ENCODE measurements at regions of chr1 and their contacts with region 1.

Region 1: GRCh38 chr1:67832737-67833601 is at the start of gene GNG12:
- DNase-seq: peak; percentile 81
- total RNA-seq, gene GNG12: 38.8 TPM

Region 2: DNA sequence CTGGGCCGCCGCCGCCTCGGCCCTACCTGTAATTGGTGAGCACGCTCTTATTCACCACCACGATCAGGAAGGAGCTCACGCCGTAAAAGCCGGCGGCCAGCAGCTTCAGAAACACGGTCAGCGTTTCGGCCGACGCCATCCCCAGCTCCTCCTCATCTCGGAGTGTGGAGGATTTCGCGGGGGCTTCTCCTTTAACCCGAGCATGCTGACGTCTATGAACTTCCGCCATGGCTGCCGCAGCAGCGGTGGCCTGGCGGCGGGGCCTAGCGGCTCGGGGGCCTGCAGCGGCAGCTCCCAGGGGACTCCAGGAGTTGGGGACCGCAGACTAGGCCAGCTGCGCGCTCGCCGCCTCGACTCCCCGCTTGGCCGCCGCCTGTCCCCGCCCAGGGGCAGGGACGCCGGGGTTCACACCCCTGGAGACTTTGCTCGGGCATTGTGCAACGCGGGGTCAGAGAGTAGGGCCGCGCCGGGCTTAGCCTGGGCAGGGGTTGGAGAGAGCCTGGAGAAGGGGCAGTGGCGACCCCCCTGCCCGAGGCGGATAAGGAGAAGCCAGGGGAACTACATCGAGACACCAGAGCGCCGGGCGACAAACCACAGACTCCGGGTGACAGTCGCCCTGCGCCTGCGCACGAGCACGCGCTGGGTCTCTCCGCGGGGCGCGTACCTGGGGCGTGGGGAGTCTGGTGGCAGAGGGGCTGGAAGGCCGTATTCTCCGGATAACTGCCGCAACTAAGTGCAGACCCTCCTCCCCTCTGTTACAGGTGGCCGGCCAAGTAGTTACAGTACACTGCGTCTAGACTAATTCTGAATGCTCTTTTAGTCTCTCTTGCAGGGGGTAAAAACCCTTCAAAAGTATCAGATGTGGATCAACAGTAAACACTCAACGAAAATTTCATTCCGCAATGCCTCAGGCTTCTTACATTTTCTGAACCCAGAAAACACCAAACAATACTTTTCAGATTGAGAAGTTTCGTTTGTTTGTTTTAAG is 778.9 kb before region 1 on chr1 and contains the start of gene SLC35D1:
- intact Hi-C with region 1: loop called (anchors 5 kb)
- DNase-seq: peak; percentile 88
- total RNA-seq, gene SLC35D1: 4.5 TPM

Region 3: GRCh38 chr1:67430352-67431155 is 402.4 kb before region 1 on chr1 and contains the start of gene SERBP1:
- intact Hi-C with region 1: loop called (anchors 10 kb)
- DNase-seq: peak; percentile 98
- total RNA-seq, gene SERBP1: 146 TPM

Region 4: DNA sequence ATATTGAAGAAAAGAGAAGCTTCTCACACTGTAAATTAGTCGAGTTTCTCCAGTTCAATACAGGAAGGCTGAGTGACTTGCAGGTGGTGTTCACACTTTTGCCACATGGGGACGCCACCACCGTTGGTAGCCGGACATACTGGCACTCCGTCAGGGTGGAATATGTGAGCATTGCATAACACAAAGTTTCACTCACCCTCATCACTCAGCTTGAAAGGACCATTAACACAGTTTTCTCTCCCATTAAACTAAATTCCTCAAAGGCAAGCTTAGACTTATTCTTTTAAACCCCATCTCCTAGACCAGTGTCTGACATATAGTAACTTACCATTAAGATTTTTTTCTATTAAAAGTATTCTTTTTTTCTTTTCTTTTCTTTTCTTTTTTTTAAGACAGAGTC is 297.5 kb before region 1 on chr1:
- intact Hi-C with region 1: loop called (anchors 5 kb)
- DNase-seq: peak; percentile 84

Region 5: DNA sequence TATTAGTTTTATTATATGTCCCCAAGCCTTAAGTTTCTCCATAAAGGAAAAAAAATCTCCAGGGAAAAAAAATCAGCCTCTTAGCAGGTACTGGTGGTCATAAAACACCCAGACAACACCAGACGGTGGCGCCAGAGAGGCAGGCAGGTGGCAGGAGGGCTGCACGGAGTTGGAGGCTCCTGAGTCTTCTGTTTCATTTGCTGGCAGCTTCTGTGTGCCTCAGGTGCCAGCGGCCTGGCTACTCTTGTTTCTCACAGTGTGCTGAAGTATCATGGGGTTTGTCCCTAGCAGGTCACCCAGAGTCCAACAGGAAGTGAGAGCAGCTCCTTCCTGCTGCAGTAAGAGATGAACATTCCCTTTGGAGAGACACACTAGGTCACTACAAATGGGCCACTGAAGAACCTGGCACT is 271.3 kb before region 1 on chr1:
- intact Hi-C with region 1: loop called (anchors 10 kb)
- DNase-seq: peak; percentile 94

Region 6: DNA sequence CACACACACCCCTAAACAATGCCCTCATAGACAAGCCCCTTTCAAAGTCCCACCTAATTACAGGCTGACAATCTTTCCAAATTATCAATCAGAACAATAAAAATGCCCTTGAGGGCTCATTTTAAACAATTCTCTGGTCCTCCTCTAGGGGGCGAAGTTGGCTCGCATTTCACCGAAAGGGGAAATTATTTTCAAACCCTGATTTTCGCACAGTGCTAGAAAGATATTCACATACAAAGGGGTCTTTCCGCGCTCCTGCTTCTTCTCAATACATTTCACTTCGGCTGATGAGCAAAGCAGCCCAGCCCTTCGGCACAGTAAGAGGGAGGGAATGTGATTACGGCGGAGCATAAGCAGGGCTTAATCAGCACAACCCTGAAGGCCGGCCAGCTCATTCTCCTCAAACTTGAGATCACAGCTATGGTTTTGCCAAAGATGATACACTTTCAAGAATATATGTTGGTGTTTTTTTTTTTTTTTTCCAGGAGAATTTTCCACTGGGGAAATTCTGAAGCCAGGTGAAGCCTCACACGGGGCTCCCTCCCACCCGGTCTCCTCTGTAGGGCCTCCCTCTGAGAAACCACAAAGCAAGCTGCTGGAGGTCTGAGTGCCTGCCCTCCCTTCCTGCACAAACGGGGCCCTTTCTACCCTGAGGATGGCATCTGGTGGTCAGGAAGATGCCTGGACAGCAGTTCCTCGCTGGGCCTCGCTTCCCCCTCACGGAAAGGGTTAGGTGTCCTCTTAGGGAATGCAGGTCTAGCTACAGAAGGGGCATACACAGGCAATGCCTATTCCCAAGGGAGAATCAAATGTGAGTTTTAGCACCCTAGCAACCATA is 66.6 kb before region 1 on chr1:
- intact Hi-C with region 1: loop called (anchors 2 kb)
- DNase-seq: no peak

Region 7: DNA sequence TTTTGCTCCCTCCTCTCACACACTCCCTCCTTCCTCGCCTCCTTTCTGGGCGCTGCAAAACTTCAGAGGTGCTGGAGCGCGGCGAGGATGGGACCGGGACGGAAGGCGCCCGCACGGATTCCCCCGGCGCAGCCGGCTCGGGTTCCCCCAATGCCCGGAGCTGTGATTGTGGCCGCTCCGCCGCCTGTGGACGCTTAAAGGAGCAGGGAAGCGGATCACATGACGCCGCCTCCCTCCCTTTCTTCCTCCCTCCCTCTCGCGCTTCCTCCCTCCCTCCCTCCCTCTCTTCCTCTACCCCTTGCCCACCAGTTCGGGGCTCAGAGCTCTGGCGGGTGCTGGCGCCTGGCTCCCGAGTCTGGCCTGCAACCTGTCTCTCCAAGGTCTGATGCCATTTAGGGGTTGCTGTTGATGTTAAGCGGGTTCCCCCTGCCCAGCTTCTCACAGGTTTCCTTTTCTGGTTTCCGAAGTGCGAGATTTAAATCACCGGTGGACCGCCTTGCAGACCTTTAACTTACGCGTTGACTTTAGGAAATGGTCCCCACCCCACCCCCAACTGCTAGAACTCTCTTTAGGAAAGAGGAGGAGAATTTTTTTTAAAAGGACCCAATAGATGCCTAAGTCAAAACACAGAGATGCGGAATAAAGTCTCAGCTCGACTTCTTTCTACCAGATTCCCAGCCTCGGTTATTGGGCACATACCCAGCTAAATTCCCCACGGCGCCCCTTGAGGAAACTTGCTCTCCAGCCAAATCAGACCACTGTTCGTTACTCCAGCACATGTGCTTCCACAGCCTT is 399.6 kb after region 1 on chr1 and contains the start of gene WLS:
- intact Hi-C with region 1: loop called (anchors 5 kb)
- DNase-seq: peak; percentile 91
- total RNA-seq, gene WLS: 78.0 TPM

Measured in cardiac septum (tissue), 1 donor.